Activated naive CD4-positive, alpha-beta T cell treated with anti-CD3 and anti-CD28 coated beads for 36 hours (primary cell): ENCODE measurements at regions of chr7 and their contacts with region 1.

Region 1: GRCh38 chr7:66628361-66629140 is at the start of gene KCTD7:
- DNase-seq: peak; percentile 97
- H3K4me3 Mint-ChIP-seq: peak within 1 kb of the TSS; percentile 83
- H3K27ac Mint-ChIP-seq: peak within 1 kb of the TSS; percentile 80
- H3K4me1 Mint-ChIP-seq: peaks cover 41% of the 10 kb centered on the region
- H3K27me3 Mint-ChIP-seq: no peaks in the 10 kb centered on the region
- total RNA-seq, gene KCTD7: 6.3 to 7.5 TPM

Region 2: DNA sequence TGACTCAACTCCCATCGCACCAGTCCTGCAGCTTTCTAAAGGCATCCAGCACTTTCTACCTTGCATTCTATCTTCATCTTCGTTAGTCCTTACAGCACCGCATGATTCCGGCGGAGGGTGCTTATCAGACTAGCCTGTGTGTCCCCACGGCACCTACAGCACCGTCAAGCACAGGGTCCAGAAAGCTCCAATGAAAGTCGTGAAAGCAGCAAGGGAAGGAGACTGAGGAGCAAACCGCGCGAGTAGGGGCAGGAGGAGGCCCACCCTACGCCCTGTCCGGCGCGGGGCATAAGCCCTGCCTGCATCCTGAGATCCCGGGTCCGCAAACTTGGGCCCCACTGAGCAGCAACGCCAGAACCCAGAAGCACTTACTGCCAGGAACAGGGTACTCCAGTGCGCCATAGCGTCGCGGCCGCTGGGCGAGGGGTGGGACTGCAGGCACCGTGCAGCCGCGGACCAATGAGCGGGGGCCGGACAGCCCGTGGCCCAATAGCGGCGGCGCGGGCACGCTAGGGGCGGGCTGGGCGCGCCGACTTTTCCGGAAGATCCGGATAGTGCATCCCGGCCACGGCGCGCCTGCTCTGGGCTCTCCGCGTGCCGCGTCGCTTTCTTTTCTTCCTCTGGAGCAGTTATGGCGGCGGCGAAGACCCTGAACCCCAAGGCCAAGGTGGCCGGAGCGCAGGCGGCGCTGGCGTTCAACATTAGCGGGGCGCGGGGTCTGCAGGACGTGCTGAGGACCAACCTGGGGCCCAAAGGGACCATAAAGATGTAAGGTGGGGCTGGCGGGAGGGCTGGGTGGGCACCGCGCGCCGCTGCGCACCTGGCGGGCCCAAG is 877.8 kb before region 1 on chr7:
- CTCF ChIA-PET with region 1: no interaction called
- intact Hi-C with region 1: loop called (anchors 1 kb)
- DNase-seq: peak; percentile 89
- H3K4me3 Mint-ChIP-seq: peak overlapping the region; percentile 84
- H3K27ac Mint-ChIP-seq: peak overlapping the region; percentile 98
- H3K4me1 Mint-ChIP-seq: peaks cover 40% of the 10 kb centered on the region
- H3K27me3 Mint-ChIP-seq: no peaks in the 10 kb centered on the region

Region 3: GRCh38 chr7:66591799-66592596 is 36.6 kb before region 1 on chr7:
- CTCF ChIA-PET with region 1: no interaction called
- intact Hi-C with region 1: loop called (anchors 1 kb)
- DNase-seq: peak; percentile 96
- H3K4me3 Mint-ChIP-seq: peak overlapping the region; percentile 98
- H3K27ac Mint-ChIP-seq: peak overlapping the region; percentile 96
- H3K4me1 Mint-ChIP-seq: peaks cover 44% of the 10 kb centered on the region
- H3K27me3 Mint-ChIP-seq: no peaks in the 10 kb centered on the region

Region 4: DNA sequence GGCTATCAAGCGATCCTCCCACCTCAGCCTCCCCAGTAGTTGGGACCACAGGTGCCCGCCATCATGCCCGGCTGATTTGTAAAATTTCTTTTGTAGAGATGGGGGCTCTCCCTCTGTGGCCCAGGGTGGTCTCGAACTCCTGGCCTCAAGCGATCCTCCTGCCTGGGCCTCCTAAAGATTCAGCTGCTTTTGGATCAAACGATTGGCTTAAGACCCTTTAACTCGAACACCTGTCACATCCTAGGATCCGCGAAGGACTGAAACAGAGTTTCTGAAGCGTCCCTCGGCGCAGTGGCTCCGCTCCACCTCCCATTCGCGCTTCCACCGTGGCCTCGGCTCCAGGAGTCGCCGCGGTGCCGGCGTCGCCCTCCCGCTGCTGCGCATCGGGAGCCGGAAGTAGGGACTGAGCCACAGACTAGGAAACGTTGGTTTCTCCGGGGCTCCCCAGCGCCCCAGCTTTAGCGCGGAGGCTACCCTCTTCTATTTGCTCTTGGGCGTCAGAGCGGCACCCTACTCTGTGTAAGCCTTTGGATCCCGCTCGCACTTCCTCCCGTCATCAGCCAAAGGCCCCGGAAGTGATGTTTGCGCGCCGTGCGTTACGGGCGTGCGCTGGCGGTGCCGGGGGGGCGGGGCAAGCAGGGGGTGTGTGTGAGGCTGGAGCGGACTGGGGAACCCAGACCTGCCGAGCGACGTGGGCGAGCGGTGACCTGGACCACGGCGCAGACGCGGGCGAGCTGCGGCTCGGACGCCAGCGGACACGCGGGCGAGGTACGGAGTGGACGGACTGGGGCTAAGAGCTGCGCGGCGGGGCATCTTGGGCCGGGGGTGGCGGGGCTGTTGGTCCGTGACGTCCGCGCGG is 53.2 kb after region 1 on chr7:
- CTCF ChIA-PET with region 1: no interaction called
- intact Hi-C with region 1: loop called (anchors 1 kb)
- DNase-seq: peak; percentile 95
- H3K4me3 Mint-ChIP-seq: peak overlapping the region; percentile 87
- H3K27ac Mint-ChIP-seq: peak overlapping the region; percentile 89
- H3K4me1 Mint-ChIP-seq: peaks cover 29% of the 10 kb centered on the region
- H3K27me3 Mint-ChIP-seq: no peaks in the 10 kb centered on the region

Region 5: GRCh38 chr7:66920769-66921395 is 292.3 kb after region 1 on chr7 and contains the start of gene TMEM248:
- CTCF ChIA-PET with region 1: no interaction called
- intact Hi-C with region 1: loop called (anchors 1 kb)
- DNase-seq: peak; percentile 95
- H3K4me3 Mint-ChIP-seq: peak within 1 kb of the TSS; percentile 100
- H3K27ac Mint-ChIP-seq: peak within 1 kb of the TSS; percentile 96
- H3K4me1 Mint-ChIP-seq: peaks cover 38% of the 10 kb centered on the region
- H3K27me3 Mint-ChIP-seq: no peaks in the 10 kb centered on the region
- total RNA-seq, gene TMEM248: 51.4 to 54.0 TPM